ENCODE measurements at regions of chr16 and their contacts with region 1.

Region 1: GRCh38 chr16:10981697-10982216 is 37.4 kb downstream of the CLEC16A start:
- DNase-seq: peak; percentile 21 to 53
- ATAC-seq: peak; percentile 85 to 93; a peak in 5 of 6 replicates
- H3K4me3 ChIP-seq: no peak overlapping the region
- H3K27ac ChIP-seq: no peak overlapping the region
- H3K4me1 ChIP-seq: no peaks in the 10 kb centered on the region
- CTCF ChIP-seq: peak; percentile 31; the same call in 2 of the 3 replicates
- EP300 ChIP-seq: no peak
- POLR2A ChIP-seq: no peak
- RAD21 ChIP-seq: 0 out of 5 replicates have a peak, but pooled peaks of 1 of the 2 experiments have one; percentile 6

Region 2: GRCh38 chr16:10971560-10971961 is 10.2 kb before region 1 on chr16:
- CTCF ChIA-PET with region 1: interaction called, 24 read pairs
- POLR2A ChIA-PET with region 1: no interaction called
- DNase-seq: peak; percentile 51 to 77
- ATAC-seq: peak; percentile 63 to 81; a peak in 4 of 6 replicates
- H3K4me3 ChIP-seq: no peak overlapping the region
- H3K27ac ChIP-seq: peak overlapping the region in 1 of 2 experiments; percentile 15; a peak in 1 of 6 replicates
- H3K4me1 ChIP-seq: no peaks in the 10 kb centered on the region
- CTCF ChIP-seq: peak; percentile 80
- EP300 ChIP-seq: no peak
- POLR2A ChIP-seq: no peak
- RAD21 ChIP-seq: peak; percentile 89 to 91